Left ventricle myocardium superior (tissue), 1 donor: ENCODE measurements at regions of chr1 and their contacts with region 1.

Region 1: DNA sequence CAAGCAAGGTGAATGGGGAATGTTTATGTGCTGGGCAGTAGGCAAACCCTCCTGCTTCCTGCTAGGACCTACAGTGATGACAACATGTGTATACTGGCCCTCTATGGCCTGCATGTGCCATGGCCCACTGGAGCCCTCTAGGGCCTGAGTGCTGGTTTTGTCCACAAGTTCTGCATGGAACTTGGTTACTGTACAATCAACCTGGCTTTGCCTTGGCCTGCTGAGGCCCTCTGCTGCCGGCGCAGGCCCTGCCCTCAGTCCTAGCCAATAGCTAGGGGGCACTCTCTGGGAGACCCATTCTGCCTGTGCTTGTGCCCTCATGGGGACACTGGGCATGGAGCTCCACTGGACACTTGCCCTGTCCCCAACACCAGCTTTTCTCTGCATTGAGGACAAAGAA is 138.6 kb upstream of the NGF start:
- DNase-seq: no peak
- ATAC-seq: no peak

Region 2: DNA sequence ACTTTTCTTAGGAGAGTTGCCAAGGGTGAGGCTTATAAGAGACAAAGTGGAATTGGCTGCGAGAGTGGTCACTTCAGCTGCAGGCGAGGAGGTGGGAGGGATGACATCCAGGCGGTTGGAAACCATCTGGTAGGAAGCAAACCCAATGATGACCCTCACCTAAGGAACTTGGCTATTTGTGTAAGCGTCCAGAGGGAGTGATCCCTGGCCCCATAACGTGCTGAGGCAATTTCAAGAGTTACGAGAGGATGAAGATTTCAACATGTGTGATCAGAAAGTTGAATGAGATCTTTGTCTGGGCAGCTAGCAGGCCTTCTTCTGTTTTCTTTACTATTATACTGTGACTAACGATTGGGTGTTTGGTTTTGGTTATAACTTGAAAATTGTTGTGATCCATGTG is 62.4 kb after region 1 on chr1:
- intact Hi-C with region 1: no loop called
- DNase-seq: peak; percentile 42
- ATAC-seq: peak; percentile 89

Region 3: DNA sequence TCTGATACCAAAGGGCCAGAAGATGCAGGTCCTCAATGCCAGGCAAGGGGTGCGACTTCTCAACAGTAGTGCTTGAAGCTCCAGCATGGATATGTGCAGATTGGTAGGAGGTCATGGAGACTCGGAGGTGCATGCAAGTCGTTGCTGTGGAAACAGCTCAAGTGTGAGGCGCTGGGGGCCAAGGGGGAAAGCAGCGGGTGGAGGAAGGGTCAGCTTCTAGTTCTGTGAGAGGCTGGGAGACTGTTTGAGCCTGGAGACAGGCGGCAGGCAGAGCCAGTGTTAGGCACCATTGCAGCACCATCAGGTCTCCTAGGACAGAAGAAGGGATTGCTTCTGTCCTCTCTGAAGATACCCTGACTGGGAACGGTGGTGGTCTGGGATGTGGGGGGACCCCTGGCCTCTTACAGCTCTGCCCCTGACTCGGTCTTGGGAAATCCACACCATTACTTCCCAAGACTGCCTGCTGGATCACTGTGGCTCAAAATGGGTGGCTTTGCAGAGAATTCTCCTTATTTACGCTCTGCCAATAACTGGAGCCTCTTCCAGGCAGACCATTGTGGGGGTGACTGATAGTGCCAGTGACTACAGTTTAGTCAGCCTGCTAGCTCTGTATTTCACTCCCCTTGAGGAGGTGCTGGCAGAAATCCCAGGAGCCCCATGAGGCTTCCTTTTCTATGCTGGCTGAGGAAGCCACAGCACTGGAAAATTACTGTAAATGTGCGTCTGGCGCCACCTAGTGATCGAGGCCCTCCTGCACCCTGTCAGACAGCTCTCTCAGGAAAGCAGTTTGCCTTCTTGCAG is 118.9 kb after region 1 on chr1:
- intact Hi-C with region 1: loop called (anchors 10 kb)
- DNase-seq: peak; percentile 92
- ATAC-seq: peak; percentile 90